SK-N-SH (cell line): ENCODE measurements at regions of chr7 and their contacts with region 1.

Region 1: DNA sequence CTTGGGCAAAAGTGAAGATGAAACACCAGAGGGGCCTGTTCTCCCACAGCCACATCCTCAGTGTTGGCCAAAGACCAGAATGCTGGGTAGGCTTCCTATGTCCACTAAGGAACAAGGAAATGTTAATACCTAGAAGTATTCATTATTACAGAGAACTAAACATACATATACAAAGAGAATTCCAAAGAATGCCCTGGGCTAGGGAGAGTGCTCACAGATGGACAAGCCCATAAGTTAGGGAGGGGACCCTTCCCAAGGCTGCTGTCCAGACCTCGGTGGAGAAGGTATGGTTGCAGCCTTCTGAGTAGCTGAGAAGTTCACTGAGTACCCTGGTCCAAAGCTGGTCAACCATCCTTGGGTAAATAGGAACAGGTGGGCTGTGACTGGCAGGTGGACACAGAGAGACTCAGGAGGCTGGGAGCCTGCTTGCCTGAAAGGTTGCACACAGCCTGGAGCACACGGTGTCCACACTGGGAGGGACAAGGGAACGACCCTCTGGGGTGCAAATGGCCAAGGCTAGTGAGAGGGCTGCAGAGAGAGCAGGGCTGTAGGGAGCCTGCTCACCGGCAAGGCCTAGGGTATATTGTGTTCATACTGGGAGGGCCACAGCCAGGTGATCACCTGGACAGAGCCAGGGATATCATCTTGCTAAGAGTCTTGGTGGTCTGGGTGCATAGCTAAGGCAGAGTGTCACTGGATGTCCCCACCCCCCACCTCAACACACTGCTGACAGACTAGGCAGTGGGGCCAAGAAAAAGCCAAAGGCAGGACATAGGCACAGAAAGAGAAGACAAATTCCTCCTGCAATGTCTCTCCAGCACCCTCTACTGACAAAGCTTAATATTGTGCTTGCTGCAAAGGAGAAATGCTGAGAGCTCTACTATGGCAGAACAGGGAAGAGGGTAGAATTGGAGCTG is 40.3 kb downstream of the CPVL start:
- DNase-seq: peak; percentile 43
- H3K4me3 ChIP-seq: no peak overlapping the region; a peak in 1 of 4 replicates
- H3K27ac ChIP-seq: no peak overlapping the region; a peak in 1 of 4 replicates
- H3K4me1 ChIP-seq: peaks cover 0 to 16% of the 10 kb centered on the region in 2 experiments; a peak in 1 of 4 replicates
- H3K27me3 ChIP-seq: peaks cover 10% of the 10 kb centered on the region
- CTCF ChIP-seq: peak; percentile 94
- EP300 ChIP-seq: no peak
- RAD21 ChIP-seq: peak; percentile 98

Region 2: DNA sequence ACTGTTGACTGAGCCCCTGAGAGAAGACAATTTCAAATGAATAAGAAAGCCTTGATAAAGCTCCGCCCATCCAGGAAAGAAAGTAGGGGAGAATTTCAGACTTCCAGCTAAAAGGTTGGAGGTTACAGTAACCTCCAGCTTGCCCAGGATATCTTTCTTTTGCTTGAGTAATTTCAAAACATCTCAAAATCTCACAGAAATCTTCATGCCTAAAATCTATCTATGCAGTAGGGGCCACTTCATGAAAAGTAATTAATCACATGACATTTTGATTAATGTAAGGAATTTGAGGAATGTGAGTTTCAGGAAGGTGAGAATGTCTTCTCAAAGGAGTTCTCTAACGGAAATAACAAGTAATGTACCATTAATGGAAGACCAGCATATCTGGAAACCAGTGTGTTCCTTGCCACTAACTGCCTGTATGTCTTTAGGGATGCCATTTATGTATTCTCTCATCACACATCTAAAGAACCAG is 172.1 kb before region 1 on chr7:
- CTCF ChIA-PET with region 1: interaction called, 1,647 read pairs
- POLR2A ChIA-PET with region 1: no interaction called
- DNase-seq: no peak
- H3K4me3 ChIP-seq: no peak overlapping the region
- H3K27ac ChIP-seq: peak overlapping the region in 1 of 2 experiments; percentile 19; a peak in 1 of 4 replicates
- H3K4me1 ChIP-seq: peaks cover 0 to 33% of the 10 kb centered on the region in 2 experiments; a peak in 2 of 4 replicates
- H3K27me3 ChIP-seq: no peaks in the 10 kb centered on the region
- CTCF ChIP-seq: no peak
- EP300 ChIP-seq: no peak
- RAD21 ChIP-seq: no peak

Region 3: GRCh38 chr7:28955718-28956619 is 150.0 kb before region 1 on chr7:
- CTCF ChIA-PET with region 1: interaction called, 359 read pairs
- POLR2A ChIA-PET with region 1: interaction called, 15 read pairs
- DNase-seq: peak; percentile 87
- H3K4me3 ChIP-seq: peak overlapping the region; percentile 52 to 59
- H3K27ac ChIP-seq: peak overlapping the region in 1 of 2 experiments; percentile 100; a peak in 2 of 4 replicates
- H3K4me1 ChIP-seq: peaks cover 11 to 66% of the 10 kb centered on the region in 2 experiments
- H3K27me3 ChIP-seq: peaks cover 36% of the 10 kb centered on the region
- CTCF ChIP-seq: peak; percentile 32
- EP300 ChIP-seq: no peak
- RAD21 ChIP-seq: peak; percentile 63

Region 4: GRCh38 chr7:28984631-28985030 is 121.4 kb before region 1 on chr7:
- CTCF ChIA-PET with region 1: interaction called, 24 read pairs
- POLR2A ChIA-PET with region 1: no interaction called
- DNase-seq: peak; percentile 42
- H3K4me3 ChIP-seq: no peak overlapping the region; a peak in 1 of 4 replicates
- H3K27ac ChIP-seq: peak overlapping the region; percentile 85 to 97
- H3K4me1 ChIP-seq: peaks cover 26 to 62% of the 10 kb centered on the region in 2 experiments
- H3K27me3 ChIP-seq: no peaks in the 10 kb centered on the region
- CTCF ChIP-seq: no peak
- EP300 ChIP-seq: peak; percentile 58 to 79; a peak in 3 of 4 replicates
- RAD21 ChIP-seq: peak; percentile 21; the same call in 1 of the 2 replicates

Region 5: GRCh38 chr7:29091715-29092114 is 14.3 kb before region 1 on chr7:
- CTCF ChIA-PET with region 1: interaction called, 35 read pairs
- POLR2A ChIA-PET with region 1: no interaction called
- DNase-seq: no peak
- H3K4me3 ChIP-seq: no peak overlapping the region
- H3K27ac ChIP-seq: peak overlapping the region in 1 of 2 experiments; percentile 36; a peak in 1 of 4 replicates
- H3K4me1 ChIP-seq: peaks cover 0 to 26% of the 10 kb centered on the region in 2 experiments; a peak in 2 of 4 replicates
- H3K27me3 ChIP-seq: peaks cover 7% of the 10 kb centered on the region; the same call in 1 of the 2 replicates
- CTCF ChIP-seq: no peak
- EP300 ChIP-seq: no peak
- RAD21 ChIP-seq: no peak

Region 6: DNA sequence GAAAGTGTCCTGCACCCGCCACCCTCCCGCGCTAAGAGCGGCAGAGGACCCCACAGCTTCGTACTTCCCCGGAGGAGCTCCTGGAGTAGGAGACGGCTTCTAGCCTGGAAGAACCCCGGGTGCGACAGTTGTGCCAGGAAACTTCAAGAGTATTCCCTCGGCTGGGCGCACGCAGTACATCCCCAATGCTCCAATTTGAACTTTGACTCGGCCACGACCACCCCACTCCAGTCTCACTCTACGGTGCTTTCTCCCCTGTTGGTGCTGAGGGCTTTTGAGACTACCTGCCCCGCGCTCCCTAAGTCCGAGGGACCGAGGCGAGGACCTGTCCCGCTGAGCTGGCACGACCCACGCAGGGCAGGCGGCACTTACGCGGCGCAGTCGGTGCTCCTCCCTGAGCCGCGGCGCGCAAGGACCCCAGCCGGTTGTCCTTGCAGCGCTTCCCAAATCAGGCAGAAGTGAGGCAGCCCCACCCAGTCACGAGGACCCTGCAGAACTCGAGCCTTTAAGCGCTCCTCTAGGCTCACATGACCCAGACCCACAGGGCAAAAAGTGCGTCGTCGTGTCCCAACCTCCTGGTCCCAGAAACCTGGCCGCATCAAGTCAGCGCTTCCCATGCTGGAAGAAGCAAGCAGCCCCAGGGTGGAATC is 40.2 kb after region 1 on chr7 and contains the start of gene CPVL:
- CTCF ChIA-PET with region 1: interaction called, 18 read pairs
- POLR2A ChIA-PET with region 1: no interaction called
- DNase-seq: peak; percentile 62
- H3K4me3 ChIP-seq: peak within 1 kb of the TSS in 1 of 2 experiments; percentile 31; a peak in 2 of 4 replicates
- H3K27ac ChIP-seq: no peak within 1 kb of the TSS
- H3K4me1 ChIP-seq: peaks cover 0 to 11% of the 10 kb centered on the region in 2 experiments; a peak in 1 of 4 replicates
- H3K27me3 ChIP-seq: peaks cover 27% of the 10 kb centered on the region
- CTCF ChIP-seq: no peak
- EP300 ChIP-seq: no peak
- RAD21 ChIP-seq: no peak
- polyA plus RNA-seq, gene CPVL: 0.16 TPM in 1 of 2 replicates, not detected in the other

Region 7: DNA sequence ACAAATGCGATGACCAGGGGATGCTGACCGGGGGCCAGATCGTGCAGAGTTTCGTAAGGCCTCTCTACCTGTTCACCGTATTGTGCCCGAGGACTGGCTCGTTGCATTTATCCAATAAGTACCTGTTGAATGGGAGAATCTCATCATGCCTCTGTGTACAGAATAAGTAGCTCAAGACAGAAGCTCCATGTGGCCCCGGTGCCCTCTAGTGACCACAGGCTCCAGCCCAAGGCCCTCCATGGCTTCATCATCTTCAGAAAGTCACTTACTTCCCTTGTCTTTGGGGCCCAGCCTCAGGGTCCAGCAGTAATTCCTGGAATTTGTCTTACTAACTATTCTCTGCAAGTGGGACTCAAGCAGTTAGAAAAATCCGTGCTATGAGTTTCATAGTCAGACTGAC is 239.6 kb after region 1 on chr7:
- CTCF ChIA-PET with region 1: interaction called, 22 read pairs
- POLR2A ChIA-PET with region 1: no interaction called
- DNase-seq: peak; percentile 63
- H3K4me3 ChIP-seq: no peak overlapping the region
- H3K27ac ChIP-seq: no peak overlapping the region
- H3K4me1 ChIP-seq: peaks cover 4% of the 10 kb centered on the region in 2 experiments; a peak in 1 of 4 replicates
- H3K27me3 ChIP-seq: no peaks in the 10 kb centered on the region
- CTCF ChIP-seq: peak; percentile 37
- EP300 ChIP-seq: no peak
- RAD21 ChIP-seq: peak; percentile 93